WTC11 (cell line): ENCODE measurements at regions of chr14 and their contacts with region 1.

Region 1: GRCh38 chr14:23345987-23346692 is 6.5 kb downstream of the SLC22A17 start:
- DNase-seq: no peak
- ATAC-seq: peak; percentile 65
- H3K4me3 Mint-ChIP-seq: no peak overlapping the region
- H3K27ac Mint-ChIP-seq: no peak overlapping the region
- H3K4me1 Mint-ChIP-seq: peaks cover 13% of the 10 kb centered on the region
- H3K27me3 Mint-ChIP-seq: peaks cover 23% of the 10 kb centered on the region
- CTCF ChIP-seq: no peak

Region 2: DNA sequence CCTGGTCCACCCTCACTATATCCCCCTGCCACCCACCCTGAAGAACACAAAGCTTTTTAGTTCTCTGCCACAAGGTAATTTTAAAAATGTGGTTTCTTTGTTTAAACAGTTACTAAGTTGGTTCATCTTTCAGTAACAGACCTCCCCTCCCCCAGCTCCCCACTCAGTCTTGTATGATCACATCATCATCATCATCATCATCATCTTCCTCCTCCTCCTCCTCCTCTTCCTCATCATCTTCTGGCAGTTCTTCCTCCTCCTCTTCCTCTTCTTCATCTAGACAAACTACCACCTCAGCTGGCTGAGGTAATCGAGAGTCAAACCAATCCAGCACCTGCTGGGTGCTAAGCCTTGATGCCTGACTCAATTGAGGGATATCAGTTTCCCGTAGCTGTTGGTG is 70.7 kb before region 1 on chr14:
- CTCF ChIA-PET with region 1: no interaction called
- POLR2A ChIA-PET with region 1: no interaction called
- DNase-seq: no peak
- ATAC-seq: no peak
- H3K4me3 Mint-ChIP-seq: no peak overlapping the region
- H3K27ac Mint-ChIP-seq: no peak overlapping the region
- H3K4me1 Mint-ChIP-seq: peaks cover 13% of the 10 kb centered on the region
- H3K27me3 Mint-ChIP-seq: peaks cover 98% of the 10 kb centered on the region
- CTCF ChIP-seq: no peak

Region 3: DNA sequence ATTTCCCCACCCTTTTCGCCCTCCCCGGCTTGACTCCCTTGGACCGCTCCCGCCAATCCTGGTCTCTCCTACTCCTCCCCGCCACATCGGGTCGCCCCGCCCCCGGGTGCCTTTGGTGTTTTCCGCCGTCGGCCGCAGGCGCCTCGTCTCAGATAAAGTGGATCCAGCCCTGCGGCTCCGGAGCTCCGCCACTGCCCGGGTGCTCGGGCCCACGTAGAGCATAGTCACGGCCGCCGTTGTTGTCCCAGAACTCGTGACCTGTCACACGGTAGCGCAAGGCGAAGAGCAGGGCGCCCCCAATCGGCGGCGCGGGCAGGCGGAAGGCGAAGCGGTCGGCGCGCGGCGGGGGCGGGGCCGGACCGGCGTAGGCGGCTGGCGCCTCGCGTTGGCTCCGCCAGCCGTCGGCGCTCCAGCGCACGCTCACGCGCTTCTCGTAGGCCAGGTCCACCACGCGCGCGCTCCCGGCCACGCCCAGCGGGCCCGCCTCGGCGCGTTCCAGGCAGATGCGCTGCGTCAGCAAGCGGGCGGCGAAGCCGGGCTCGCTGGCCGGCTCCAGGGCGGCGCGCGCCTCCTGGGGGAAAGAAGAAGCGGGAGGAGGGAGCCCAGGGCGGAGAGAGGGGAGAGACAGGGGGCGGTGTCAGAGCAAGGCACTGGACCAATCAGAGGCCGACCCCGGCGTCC is 44.7 kb before region 1 on chr14:
- CTCF ChIA-PET with region 1: interaction called, 12 read pairs
- POLR2A ChIA-PET with region 1: interaction called, 6 read pairs
- DNase-seq: peak; percentile 98
- ATAC-seq: peak; percentile 83
- H3K4me3 Mint-ChIP-seq: peak overlapping the region; percentile 85
- H3K27ac Mint-ChIP-seq: peak overlapping the region; percentile 91
- H3K4me1 Mint-ChIP-seq: peaks cover 10% of the 10 kb centered on the region
- H3K27me3 Mint-ChIP-seq: peaks cover 63% of the 10 kb centered on the region
- CTCF ChIP-seq: peak; percentile 60; the same call in 1 of the 2 replicates

Region 4: DNA sequence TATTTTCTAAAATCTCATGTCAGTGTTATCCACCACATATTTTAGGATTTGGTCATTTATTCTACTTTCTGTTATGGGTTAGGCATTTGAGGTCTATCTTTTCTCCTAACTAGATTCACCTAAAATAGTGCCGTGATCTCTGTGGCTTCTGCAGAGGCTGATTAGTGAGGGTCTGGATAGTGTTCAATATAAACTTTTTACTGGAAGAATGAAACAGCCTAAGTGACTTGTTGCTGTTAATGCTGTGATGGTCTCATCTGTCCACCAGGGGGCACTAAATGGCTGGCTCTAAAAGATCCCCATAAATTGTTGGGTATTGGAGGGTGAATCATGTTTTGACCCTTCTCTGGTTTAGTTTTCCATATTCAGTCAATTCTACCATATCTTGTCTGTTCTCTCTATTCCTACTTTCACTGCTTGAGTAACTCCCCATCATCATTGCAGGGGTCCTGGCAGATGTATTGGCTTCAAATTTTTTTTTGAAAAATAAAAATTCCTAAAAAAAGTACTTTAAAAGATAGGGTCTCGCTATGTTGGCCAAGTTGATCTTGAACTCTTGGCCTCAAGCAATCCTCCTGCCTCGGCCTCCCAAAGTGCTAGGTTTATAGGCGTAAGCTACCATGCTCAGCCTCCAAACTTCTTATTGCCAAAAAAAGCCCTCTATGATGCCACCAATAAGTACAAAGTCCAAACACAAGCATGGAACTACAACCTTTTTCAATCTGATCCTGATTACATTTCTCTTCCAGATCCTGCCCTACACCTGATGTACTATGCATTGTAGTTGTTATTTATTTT is 18.0 kb before region 1 on chr14:
- CTCF ChIA-PET with region 1: interaction called, 23 read pairs
- POLR2A ChIA-PET with region 1: interaction called, 17 read pairs
- DNase-seq: peak; percentile 72
- ATAC-seq: peak; percentile 70
- H3K4me3 Mint-ChIP-seq: no peak overlapping the region
- H3K27ac Mint-ChIP-seq: no peak overlapping the region
- H3K4me1 Mint-ChIP-seq: peaks cover 3% of the 10 kb centered on the region
- H3K27me3 Mint-ChIP-seq: no peaks in the 10 kb centered on the region; the same call in 1 of the 2 replicates
- CTCF ChIP-seq: peak; percentile 76

Region 5: GRCh38 chr14:23360496-23360895 is 14.4 kb after region 1 on chr14:
- CTCF ChIA-PET with region 1: interaction called, 73 read pairs
- POLR2A ChIA-PET with region 1: interaction called, 7 read pairs
- DNase-seq: peak; percentile 69
- ATAC-seq: peak; percentile 58
- H3K4me3 Mint-ChIP-seq: no peak overlapping the region
- H3K27ac Mint-ChIP-seq: no peak overlapping the region
- H3K4me1 Mint-ChIP-seq: peaks cover 22% of the 10 kb centered on the region
- H3K27me3 Mint-ChIP-seq: peaks cover 6% of the 10 kb centered on the region
- CTCF ChIP-seq: no peak

Region 6: DNA sequence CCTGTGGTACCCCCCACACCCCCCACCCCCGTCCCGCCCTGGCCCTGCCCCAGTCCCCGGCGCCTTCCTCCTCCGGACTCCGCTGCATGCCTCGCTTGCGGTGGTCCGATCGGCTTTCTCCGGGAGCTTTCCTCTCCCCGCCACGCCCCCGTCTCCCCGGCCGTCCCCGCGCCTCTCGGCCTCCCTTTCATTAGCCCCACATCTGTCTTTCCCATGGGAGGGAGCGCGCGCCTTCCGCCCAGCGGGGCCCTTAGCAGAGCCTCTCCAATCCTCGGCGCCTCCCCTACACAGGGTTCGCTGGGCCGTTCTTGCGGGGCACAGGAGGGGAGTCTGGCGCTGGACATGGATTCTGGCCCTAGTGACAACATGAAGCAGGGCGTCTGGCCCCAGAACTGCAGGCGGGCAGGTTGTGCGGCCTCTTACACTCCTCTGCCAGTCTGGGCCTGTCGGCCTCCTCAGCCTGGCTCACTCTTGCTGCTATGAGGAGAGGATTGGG is 20.3 kb after region 1 on chr14:
- CTCF ChIA-PET with region 1: interaction called, 73 read pairs
- POLR2A ChIA-PET with region 1: interaction called, 7 read pairs
- DNase-seq: peak; percentile 93
- ATAC-seq: peak; percentile 63
- H3K4me3 Mint-ChIP-seq: peak overlapping the region; percentile 71
- H3K27ac Mint-ChIP-seq: peak overlapping the region; percentile 75
- H3K4me1 Mint-ChIP-seq: peaks cover 27% of the 10 kb centered on the region
- H3K27me3 Mint-ChIP-seq: peaks cover 51% of the 10 kb centered on the region
- CTCF ChIP-seq: no peak